BJ (cell line): ENCODE measurements at regions of chr15 and their contacts with region 1.

Region 1: GRCh38 chr15:46386356-46386755 is 751.5 kb downstream of the SQOR start:
- DNase-seq: no peak
- H3K4me3 ChIP-seq: no peak overlapping the region
- H3K27me3 ChIP-seq: no peaks in the 10 kb centered on the region
- CTCF ChIP-seq: no peak

Region 2: DNA sequence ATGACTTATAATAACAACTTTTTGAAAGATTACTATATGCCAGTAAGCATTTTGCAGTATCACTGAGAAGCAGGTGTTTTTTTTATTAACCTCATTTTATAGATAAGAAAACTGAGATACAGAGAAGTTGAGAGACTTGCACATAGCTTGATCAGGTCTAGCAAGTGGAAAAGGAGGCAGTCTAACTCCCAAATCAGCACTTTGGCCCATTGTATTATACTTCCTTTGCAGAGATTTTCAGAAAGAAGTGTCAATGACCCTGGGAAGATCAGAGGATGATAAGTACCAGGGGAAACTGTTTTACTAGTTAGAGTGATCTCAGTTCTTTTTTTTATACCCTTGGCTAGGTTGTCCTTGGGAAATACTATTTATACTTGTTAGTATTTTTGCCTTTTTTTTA is 392.8 kb before region 1 on chr15:
- CTCF ChIA-PET with region 1: no interaction called
- POLR2A ChIA-PET with region 1: interaction called, 16 read pairs
- DNase-seq: no peak
- H3K4me3 ChIP-seq: no peak overlapping the region
- H3K27me3 ChIP-seq: no peaks in the 10 kb centered on the region
- CTCF ChIP-seq: no peak

Region 3: DNA sequence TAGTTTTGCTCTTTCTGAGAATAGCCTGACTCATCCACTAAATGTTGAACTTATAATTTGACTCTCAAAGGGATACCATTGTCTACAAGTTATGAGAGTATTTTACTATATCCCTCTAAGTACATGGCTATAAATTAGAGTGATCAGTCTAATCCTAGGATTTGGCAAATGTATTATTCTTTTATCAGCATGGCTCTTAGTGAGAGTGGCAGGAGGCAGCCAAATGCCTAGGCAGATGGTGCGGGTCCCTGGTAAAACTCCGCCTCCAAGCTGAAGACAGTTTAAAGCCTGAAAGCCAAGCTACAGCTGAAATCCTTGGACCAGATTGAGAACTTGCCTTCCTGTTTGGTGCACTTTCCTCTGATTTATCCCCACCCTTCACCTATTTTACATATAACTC is 119.7 kb before region 1 on chr15:
- CTCF ChIA-PET with region 1: no interaction called
- POLR2A ChIA-PET with region 1: no interaction called
- DNase-seq: no peak
- H3K4me3 ChIP-seq: no peak overlapping the region
- H3K27me3 ChIP-seq: no peaks in the 10 kb centered on the region
- CTCF ChIP-seq: no peak